Astrocyte of the cerebellum (primary cell): ENCODE measurements at regions of chr4 and their contacts with region 1.

Region 1: GRCh38 chr4:147866532-147867271 is 134.8 kb downstream of the ARHGAP10 start:
- DNase-seq: peak; percentile 92
- H3K4me3 ChIP-seq: no peak overlapping the region
- CTCF ChIP-seq: peak; percentile 98

Region 2: DNA sequence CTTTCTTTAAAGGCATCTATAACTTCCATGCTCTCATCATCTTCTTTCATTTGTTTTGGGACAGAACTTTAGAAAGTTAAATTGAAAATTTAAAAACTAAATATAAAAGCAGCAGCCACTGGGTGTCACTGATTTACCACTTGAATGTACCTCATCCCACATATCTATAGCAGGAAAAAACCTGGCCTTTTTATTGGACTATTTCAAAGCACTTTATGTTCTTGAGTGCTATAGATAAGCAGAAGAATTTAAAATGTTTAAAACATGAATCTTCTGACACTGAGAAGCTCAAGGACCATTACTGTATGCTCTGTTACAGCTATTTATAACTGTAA is 755.7 kb before region 1 on chr4:
- in situ Hi-C with region 1: loop called (anchors 5 kb)
- DNase-seq: no peak
- H3K4me3 ChIP-seq: no peak overlapping the region
- CTCF ChIP-seq: no peak

Region 3: GRCh38 chr4:147799986-147800555 is 66.6 kb before region 1 on chr4:
- in situ Hi-C with region 1: no loop called
- DNase-seq: peak; percentile 13
- H3K4me3 ChIP-seq: no peak overlapping the region
- CTCF ChIP-seq: no peak

Region 4: DNA sequence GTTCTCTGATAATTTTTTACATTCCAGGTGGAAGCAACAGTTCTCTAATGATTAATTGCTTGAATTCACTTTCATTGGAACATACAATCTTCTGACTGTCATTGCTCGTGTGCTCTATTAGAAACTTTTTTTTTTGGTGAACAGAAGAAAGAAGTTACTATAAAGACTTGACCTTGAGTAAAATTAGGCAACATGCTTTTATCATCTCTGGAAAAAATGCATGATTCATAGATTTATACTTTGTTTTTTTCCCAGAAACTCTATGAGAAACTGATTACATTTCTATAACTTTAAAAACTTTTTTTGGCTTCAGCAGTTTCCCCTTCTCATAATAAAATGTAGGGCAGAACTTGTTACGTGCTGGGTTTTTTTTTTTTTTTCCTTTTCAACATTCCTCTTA is 32.8 kb after region 1 on chr4:
- in situ Hi-C with region 1: no loop called
- DNase-seq: no peak
- H3K4me3 ChIP-seq: no peak overlapping the region
- CTCF ChIP-seq: no peak